SK-N-SH (cell line): ENCODE measurements at regions of chr17 and their contacts with region 1.

Region 1: GRCh38 chr17:1896243-1897104 is 66.7 kb downstream of the RPA1 start:
- DNase-seq: no peak
- H3K4me3 ChIP-seq: no peak overlapping the region
- H3K27ac ChIP-seq: peak overlapping the region in 1 of 2 experiments; percentile 91; a peak in 2 of 4 replicates
- H3K4me1 ChIP-seq: peaks cover 0 to 25% of the 10 kb centered on the region in 2 experiments; a peak in 2 of 4 replicates
- H3K27me3 ChIP-seq: no peaks in the 10 kb centered on the region
- CTCF ChIP-seq: no peak
- EP300 ChIP-seq: no peak
- RAD21 ChIP-seq: no peak

Region 2: DNA sequence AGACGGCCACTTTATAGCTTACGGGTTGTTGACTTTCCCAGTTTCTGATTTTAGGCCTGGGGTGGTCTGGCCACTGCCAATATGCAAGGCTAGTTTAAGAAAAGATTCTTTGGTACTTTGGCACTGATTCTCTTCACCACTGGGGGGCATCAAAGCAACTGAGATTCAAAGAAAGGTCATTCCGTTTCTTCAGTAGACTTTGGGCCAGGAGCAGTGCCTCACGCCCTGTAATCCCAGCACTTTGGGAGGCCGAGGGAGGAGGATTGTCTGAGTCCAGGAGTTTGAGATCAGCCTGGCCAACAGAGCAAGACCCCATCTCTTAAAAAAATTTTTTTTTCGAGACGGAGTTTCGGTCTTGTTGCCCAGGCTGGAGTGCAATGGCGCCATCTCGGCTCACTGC is 13.6 kb before region 1 on chr17:
- CTCF ChIA-PET with region 1: interaction called, 10 read pairs
- POLR2A ChIA-PET with region 1: no interaction called
- DNase-seq: peak; percentile 49
- H3K4me3 ChIP-seq: no peak overlapping the region; a peak in 1 of 4 replicates
- H3K27ac ChIP-seq: no peak overlapping the region
- H3K4me1 ChIP-seq: no peaks in the 10 kb centered on the region
- H3K27me3 ChIP-seq: no peaks in the 10 kb centered on the region
- CTCF ChIP-seq: peak; percentile 57
- EP300 ChIP-seq: no peak
- RAD21 ChIP-seq: peak; percentile 66